Calu3 (cell line): ENCODE measurements at regions of chr16 and their contacts with region 1.

Region 1: DNA sequence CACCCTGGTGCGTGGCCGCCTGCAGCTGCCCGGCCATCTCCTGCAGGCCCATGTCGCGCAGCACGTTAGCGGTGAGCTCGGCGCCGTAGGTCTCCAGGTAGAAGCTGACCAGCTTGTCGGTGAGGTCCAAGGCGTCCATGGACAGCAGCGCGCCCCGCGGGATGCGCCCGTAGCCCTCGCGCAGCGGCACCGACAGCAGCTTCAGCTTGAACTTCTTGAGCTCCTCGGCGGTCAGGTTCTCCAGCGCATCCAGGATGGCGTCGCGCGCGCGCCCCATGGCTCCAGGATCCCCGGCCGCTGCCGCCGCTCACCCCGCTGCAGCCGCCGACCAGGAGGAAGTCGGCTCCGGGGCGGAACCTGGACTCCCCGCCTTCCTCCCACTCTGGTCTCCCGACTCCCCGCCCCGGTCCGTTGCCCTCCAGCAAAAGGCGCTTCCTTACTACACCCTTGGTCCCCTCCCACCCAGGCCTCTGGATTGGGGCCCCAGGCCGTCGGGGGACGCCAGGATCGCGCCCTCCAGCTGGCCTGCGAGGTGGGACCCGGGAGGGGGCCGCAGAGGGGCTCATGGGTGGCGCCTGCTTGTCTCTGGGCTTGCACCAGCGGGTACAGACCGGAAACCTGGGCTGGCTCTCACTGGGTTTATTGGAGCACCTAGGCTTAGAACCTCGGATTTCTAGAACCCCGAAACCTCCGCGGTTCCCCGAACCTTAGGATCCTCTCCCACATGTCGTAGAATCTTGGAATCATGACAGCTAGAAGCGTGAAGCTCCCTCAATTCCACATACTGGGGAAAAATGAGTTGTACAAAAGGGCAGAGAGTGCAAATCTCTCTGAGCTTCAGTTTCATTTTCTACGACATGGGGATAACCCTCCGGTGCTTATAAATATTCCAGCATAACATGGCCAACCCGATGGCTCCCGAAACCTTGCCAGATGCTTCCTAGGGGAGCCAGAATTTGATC is at the start of gene PYCARD:
- DNase-seq: peak; percentile 56
- H3K4me3 Mint-ChIP-seq: peak within 1 kb of the TSS; percentile 84
- H3K27ac Mint-ChIP-seq: peak within 1 kb of the TSS; percentile 54
- H3K4me1 Mint-ChIP-seq: peaks cover 26% of the 10 kb centered on the region
- H3K27me3 Mint-ChIP-seq: peaks cover 39% of the 10 kb centered on the region
- CTCF ChIP-seq: no peak
- total RNA-seq, gene PYCARD: 24.3 and 30.9 TPM in 2 replicates

Region 2: GRCh38 chr16:31016018-31016417 is 186.7 kb before region 1 on chr16:
- CTCF ChIA-PET with region 1: no interaction called
- intact Hi-C with region 1: no loop called
- DNase-seq: peak; percentile 27
- H3K4me3 Mint-ChIP-seq: no peak overlapping the region
- H3K27ac Mint-ChIP-seq: no peak overlapping the region
- H3K4me1 Mint-ChIP-seq: no peaks in the 10 kb centered on the region
- H3K27me3 Mint-ChIP-seq: peaks cover 32% of the 10 kb centered on the region
- CTCF ChIP-seq: no peak

Region 3: DNA sequence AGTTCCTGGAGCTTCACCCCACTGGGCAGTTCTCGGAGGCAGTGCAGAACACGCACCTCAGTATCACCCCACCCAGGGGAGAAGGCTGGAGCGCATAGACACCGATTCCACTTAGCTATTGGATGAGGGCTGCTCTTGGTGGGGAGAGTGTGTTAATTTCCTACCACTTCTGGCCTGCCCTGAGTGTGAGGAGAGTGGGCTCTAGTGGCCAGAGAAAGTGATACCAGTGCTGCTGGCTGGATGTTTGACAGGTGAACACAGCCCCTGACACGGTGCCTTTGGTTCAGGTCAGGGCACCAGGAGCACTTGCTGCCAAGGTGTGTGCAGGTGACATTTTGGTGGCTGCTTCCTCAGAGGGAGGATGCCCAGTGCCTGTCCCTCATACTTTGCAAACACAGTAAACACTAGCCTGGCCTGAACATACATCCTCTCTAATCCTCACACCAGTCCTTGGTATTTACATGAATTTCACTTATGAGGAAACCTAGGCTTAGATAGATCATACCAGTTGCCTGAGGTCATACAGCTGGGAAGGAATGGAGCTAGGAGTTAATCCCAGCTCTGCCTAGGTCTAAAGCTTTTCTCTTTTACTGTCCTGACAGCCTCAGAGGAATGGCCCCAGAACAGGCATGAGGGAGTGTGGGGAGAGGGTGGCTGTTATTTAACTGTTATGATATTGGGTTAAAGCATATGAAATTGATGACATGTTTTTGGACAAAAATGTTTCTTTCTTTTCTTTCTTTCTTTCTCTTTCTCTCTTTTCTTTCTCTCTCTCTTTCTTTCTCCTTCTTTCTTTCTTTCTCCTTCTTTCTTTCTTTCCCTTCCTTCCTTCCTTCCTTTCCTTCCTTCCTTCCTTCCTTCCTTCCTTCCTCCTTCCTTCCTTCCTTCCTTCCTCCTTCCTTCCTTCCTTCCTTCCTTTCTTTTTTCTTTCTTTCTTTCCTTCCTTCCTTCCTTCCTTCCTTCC is 131.3 kb after region 1 on chr16:
- CTCF ChIA-PET with region 1: interaction called, 3 read pairs
- intact Hi-C with region 1: loop called (anchors 5 kb)
- DNase-seq: peak; percentile 64
- H3K4me3 Mint-ChIP-seq: no peak overlapping the region
- H3K27ac Mint-ChIP-seq: no peak overlapping the region
- H3K4me1 Mint-ChIP-seq: peaks cover 12% of the 10 kb centered on the region
- H3K27me3 Mint-ChIP-seq: peaks cover 36% of the 10 kb centered on the region
- CTCF ChIP-seq: peak; percentile 40

Region 4: GRCh38 chr16:31440516-31441184 is 238.0 kb after region 1 on chr16:
- CTCF ChIA-PET with region 1: interaction called, 3 read pairs
- intact Hi-C with region 1: loop called (anchors 5 kb)
- DNase-seq: no peak
- H3K4me3 Mint-ChIP-seq: no peak overlapping the region
- H3K27ac Mint-ChIP-seq: no peak overlapping the region
- H3K4me1 Mint-ChIP-seq: peaks cover 7% of the 10 kb centered on the region
- H3K27me3 Mint-ChIP-seq: peaks cover 8% of the 10 kb centered on the region
- CTCF ChIP-seq: no peak